ENCODE measurements at regions of chr11 and their contacts with region 1.

Region 1: GRCh38 chr11:66126808-66127555 is 56.9 kb downstream of the PACS1 start:
- DNase-seq: peak; percentile 83
- H3K4me3 ChIP-seq: peak overlapping the region; percentile 4
- H3K27ac ChIP-seq: peak overlapping the region; percentile 72
- H3K4me1 ChIP-seq: peaks cover 34% of the 10 kb centered on the region
- H3K27me3 ChIP-seq: no peaks in the 10 kb centered on the region
- CTCF ChIP-seq: 0 out of 2 replicates have a peak, but pooled peaks have one; percentile 25

Region 2: GRCh38 chr11:66142370-66143263 is 15.6 kb after region 1 on chr11:
- CTCF ChIA-PET with region 1: no interaction called
- POLR2A ChIA-PET with region 1: no interaction called
- intact Hi-C with region 1: no loop called
- DNase-seq: no peak
- H3K4me3 ChIP-seq: no peak overlapping the region
- H3K27ac ChIP-seq: no peak overlapping the region
- H3K4me1 ChIP-seq: no peaks in the 10 kb centered on the region
- H3K27me3 ChIP-seq: no peaks in the 10 kb centered on the region
- CTCF ChIP-seq: no peak

Region 3: GRCh38 chr11:66288671-66289547 is 161.9 kb after region 1 on chr11 and contains the start of gene YIF1A:
- CTCF ChIA-PET with region 1: no interaction called
- POLR2A ChIA-PET with region 1: interaction called, 13 read pairs
- intact Hi-C with region 1: no loop called
- DNase-seq: peak; percentile 100
- H3K4me3 ChIP-seq: peak within 1 kb of the TSS; percentile 77
- H3K27ac ChIP-seq: peak within 1 kb of the TSS; percentile 91
- H3K4me1 ChIP-seq: peaks cover 19% of the 10 kb centered on the region
- H3K27me3 ChIP-seq: no peaks in the 10 kb centered on the region
- CTCF ChIP-seq: peak; percentile 39; the same call in 1 of the 2 replicates
- total RNA-seq, gene YIF1A: 125 and 128 TPM in 2 replicates

Measured in A673 (cell line).